Activated CD4-positive, alpha-beta memory T cell treated with anti-CD3 and anti-CD28 coated beads, Interleukin-2, amount 10 ng/mL, durations not matched to agents 7 days and 5 days (primary cell): ENCODE measurements at regions of chr2 and their contacts with region 1.

Region 1: GRCh38 chr2:189440947-189441708 is at the start of gene WDR75:
- DNase-seq: peak; percentile 93
- H3K4me3 Mint-ChIP-seq: peak within 1 kb of the TSS; percentile 98
- H3K27ac Mint-ChIP-seq: peak within 1 kb of the TSS; percentile 96
- H3K4me1 Mint-ChIP-seq: peaks cover 22% of the 10 kb centered on the region
- H3K27me3 Mint-ChIP-seq: peaks cover 5% of the 10 kb centered on the region
- total RNA-seq, gene WDR75: 31.4 to 34.0 TPM

Region 2: GRCh38 chr2:188551671-188552070 is 889.5 kb before region 1 on chr2:
- CTCF ChIA-PET with region 1: no interaction called
- POLR2A ChIA-PET with region 1: no interaction called
- DNase-seq: no peak
- H3K4me3 Mint-ChIP-seq: no peak overlapping the region
- H3K27ac Mint-ChIP-seq: no peak overlapping the region
- H3K4me1 Mint-ChIP-seq: no peaks in the 10 kb centered on the region
- H3K27me3 Mint-ChIP-seq: no peaks in the 10 kb centered on the region

Region 3: DNA sequence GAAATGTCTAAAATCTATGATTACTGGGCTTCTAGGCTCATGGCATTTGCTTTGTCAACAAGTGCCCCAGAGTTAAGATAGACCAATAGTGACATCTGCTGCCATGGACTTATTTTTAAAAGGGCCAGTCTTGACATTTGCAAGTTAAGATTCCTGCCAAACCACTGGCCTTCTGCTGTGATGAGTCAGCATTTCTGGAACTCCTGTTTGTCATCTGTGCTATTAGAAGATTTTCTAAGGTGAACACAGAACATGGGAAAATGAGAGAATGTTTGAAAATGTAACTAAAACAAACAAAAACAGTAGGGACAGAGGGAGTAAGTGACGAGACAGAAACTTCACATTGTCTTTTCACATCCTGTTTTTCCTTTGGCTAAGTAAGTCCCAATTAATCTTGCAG is 93.6 kb before region 1 on chr2:
- CTCF ChIA-PET with region 1: no interaction called
- POLR2A ChIA-PET with region 1: no interaction called
- DNase-seq: no peak
- H3K4me3 Mint-ChIP-seq: no peak overlapping the region
- H3K27ac Mint-ChIP-seq: no peak overlapping the region
- H3K4me1 Mint-ChIP-seq: peaks cover 6% of the 10 kb centered on the region
- H3K27me3 Mint-ChIP-seq: no peaks in the 10 kb centered on the region

Region 4: DNA sequence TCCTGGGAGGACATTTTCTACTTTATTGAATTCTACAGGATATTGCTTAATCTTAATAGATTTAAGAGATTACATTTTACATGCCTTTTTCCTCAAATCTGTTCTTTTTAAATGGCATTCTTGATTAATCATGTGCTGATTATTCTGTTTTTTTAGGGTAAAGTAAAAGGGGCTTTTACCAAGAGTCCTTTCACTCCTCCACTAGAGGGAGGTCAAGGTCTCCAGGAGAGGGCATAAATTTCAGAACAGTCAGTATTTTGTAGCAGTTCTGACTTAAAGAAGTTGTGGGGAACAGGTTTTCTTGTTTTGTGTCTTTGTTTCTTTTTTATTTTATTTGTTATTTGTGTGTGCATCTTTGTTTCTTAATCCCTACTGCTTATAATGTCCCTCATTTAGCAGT is 25.5 kb after region 1 on chr2:
- CTCF ChIA-PET with region 1: interaction called, 3 read pairs
- POLR2A ChIA-PET with region 1: interaction called, 17 read pairs
- DNase-seq: no peak
- H3K4me3 Mint-ChIP-seq: no peak overlapping the region
- H3K27ac Mint-ChIP-seq: no peak overlapping the region
- H3K4me1 Mint-ChIP-seq: no peaks in the 10 kb centered on the region
- H3K27me3 Mint-ChIP-seq: no peaks in the 10 kb centered on the region

Region 5: GRCh38 chr2:189580658-189581353 is 139.7 kb after region 1 on chr2 and contains the start of gene SLC40A1:
- CTCF ChIA-PET with region 1: no interaction called
- POLR2A ChIA-PET with region 1: interaction called, 12 read pairs
- DNase-seq: peak; percentile 63
- H3K4me3 Mint-ChIP-seq: peak within 1 kb of the TSS; percentile 72
- H3K27ac Mint-ChIP-seq: peak within 1 kb of the TSS; percentile 33
- H3K4me1 Mint-ChIP-seq: peaks cover 26% of the 10 kb centered on the region
- H3K27me3 Mint-ChIP-seq: peaks cover 35% of the 10 kb centered on the region
- total RNA-seq, gene SLC40A1: 4.4 to 6.0 TPM